ENCODE measurements at regions of chr12 and their contacts with region 1.

Region 1: DNA sequence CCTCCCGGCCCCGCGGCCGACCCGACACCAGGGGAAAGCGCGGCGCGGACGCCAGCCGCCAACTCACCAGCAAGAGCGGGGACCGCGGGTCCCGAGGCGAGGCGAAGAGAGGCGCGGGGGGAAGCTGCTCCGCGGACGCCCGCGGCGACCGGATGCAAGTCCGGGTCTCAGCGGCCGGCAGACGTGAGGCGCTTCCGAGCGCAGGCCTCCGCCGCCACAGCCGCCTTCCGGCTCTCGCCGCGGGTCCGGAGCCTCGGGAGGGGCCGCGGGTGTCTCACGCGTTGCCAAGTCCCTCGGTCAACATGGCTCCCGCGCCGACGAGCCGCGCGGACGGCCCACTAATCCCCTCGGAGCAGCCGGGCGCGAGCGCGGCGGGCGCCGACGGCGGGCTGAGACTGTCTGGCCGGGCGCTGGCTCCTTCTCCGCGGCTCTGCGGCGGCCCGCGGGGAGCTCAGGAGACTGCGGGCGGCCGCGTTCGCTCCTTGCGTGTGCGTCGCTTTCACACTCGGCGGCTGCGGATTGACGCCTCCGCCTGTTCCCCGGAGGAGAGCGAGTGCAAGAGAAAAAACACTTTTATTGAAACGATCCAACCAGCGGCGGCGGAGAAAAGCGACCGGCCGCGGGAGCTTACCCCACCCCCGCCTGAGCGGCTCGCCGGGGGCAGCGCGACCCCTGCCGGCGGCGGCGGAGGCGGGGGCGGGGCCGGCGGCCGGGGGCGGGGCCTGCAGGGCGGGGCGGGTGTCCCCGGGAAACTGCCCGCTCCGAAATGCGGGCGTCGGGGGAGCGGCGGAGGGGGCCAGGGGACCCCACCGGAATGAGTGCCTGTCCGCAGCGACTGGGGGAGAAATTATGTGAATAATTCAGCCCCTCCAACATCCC is at the start of gene CDK17:
- DNase-seq: no peak
- ATAC-seq: peak; percentile 59
- H3K4me3 ChIP-seq: peak within 1 kb of the TSS; percentile 92
- H3K27ac ChIP-seq: peak within 1 kb of the TSS; percentile 96
- H3K4me1 ChIP-seq: peaks cover 24% of the 10 kb centered on the region; the same call in 1 of the 2 replicates
- H3K27me3 ChIP-seq: no peaks in the 10 kb centered on the region
- CTCF ChIP-seq: peak in 2 of 3 experiments; percentile 36 to 58; a peak in 3 of 6 replicates
- EP300 ChIP-seq: no peak
- POLR2A ChIP-seq: peak; percentile 67
- RAD21 ChIP-seq: peak; percentile 58
- polyA plus RNA-seq, gene CDK17: 5.6 to 6.1 TPM

Region 2: DNA sequence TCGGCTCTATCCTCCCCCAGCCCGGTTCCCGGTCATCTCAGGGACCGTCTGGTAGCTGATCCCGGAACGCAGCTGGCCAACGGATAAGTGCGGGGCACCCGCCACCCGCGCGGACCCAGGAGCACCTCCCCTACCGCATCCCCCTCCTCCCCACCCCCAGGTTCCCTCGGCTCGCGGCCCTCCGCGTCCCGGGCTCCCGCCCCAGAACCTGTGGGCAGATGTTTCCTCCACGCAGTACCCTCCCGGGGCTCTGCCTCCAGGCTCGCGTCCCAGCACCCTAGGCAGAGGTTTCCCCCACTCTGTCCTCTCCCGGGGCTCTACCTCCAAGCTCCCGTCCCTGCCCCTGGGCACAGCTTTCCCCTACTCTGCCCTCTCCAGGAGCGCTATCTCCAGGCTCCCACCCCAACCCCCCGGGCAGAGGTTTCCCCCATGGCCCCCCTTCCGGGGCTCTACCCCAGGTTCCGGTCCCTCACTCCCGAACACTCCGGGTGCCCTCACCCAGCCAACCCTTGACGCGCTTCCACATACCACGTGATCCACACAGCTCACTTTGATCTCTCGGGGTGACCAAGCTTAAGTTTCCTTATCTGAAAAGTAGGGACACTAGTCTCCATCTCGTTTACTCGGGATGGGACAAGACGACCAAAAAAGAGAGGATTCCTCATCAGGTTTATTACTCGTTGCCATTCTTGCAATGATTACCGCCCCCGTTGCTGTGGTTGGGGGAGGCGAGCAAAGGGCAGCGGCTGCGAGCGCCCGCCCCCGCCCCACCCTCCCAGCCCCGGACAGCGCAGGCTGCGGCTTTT is 457.4 kb before region 1 on chr12 and contains the start of gene CCDC38:
- CTCF ChIA-PET with region 1: no interaction called
- POLR2A ChIA-PET with region 1: no interaction called
- RAD21 ChIA-PET with region 1: no interaction called
- SMC1A ChIA-PET with region 1: no interaction called
- in situ Hi-C with region 1: no loop called
- intact Hi-C with region 1: no loop called
- DNase-seq: peak; percentile 57
- ATAC-seq: peak; percentile 98
- H3K4me3 ChIP-seq: peak within 1 kb of the TSS; percentile 94
- H3K27ac ChIP-seq: peak within 1 kb of the TSS; percentile 53
- H3K4me1 ChIP-seq: peaks cover 3% of the 10 kb centered on the region; the same call in 1 of the 2 replicates
- H3K27me3 ChIP-seq: no peaks in the 10 kb centered on the region
- CTCF ChIP-seq: no peak
- EP300 ChIP-seq: no peak
- POLR2A ChIP-seq: peak; percentile 78
- RAD21 ChIP-seq: no peak
- polyA plus RNA-seq, gene CCDC38: not detected

Region 3: DNA sequence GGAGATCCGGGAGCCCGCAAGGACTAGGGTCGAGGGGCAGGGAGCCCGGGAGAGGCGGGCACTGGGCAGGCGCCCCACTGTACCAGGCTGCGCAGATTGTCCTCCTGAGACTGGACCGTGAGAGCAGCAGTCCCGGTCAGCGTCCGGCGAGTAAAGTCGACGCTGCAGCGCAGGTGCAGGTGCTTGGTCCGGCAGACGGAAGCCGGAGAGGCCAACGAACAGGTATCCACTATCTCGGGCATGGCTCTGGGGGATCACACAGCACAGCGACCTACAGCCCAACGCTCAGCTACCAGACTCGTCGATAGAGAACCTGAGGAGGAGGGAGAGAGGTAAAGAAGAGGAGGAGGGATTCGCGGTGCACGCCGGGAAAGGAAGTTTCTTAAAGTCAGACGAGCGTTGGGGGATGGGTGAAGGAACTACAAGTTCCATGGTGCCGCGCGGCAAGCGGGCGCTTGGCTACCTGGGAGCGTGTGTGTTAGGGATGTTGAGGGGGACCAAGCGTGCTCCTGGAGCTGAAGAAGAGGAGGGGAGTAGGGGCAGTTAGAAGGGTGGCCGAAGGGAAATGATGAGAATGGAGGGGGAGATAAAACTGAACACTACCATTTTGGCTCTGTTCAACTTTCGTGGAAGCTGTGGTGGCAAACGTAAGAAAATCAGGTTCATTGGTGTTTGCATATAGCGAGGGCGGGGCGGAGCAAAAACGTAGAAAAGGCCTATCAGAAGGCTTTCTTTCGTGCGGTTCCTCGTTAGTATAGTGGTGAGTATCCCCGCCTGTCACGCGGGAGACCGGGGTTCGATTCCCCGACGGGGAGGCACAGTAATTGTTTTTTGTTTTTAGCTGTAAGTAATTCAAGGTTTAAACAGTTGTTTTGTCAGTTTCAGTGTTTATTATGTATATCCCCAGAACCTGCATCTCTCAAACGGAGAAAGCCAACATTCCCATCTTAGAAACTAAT is 364.6 kb before region 1 on chr12 and contains the start of gene LTA4H:
- CTCF ChIA-PET with region 1: no interaction called
- POLR2A ChIA-PET with region 1: no interaction called
- RAD21 ChIA-PET with region 1: no interaction called
- SMC1A ChIA-PET with region 1: no interaction called
- in situ Hi-C with region 1: no loop called
- intact Hi-C with region 1: loop called (anchors 10 kb)
- DNase-seq: peak; percentile 97
- ATAC-seq: peak; percentile 93
- H3K4me3 ChIP-seq: peak within 1 kb of the TSS; percentile 77
- H3K27ac ChIP-seq: peak within 1 kb of the TSS; percentile 38; the same call in 1 of the 2 replicates
- H3K4me1 ChIP-seq: peaks cover 4% of the 10 kb centered on the region; the same call in 1 of the 2 replicates
- H3K27me3 ChIP-seq: no peaks in the 10 kb centered on the region
- CTCF ChIP-seq: no peak
- EP300 ChIP-seq: no peak; a peak in 1 of 4 replicates
- POLR2A ChIP-seq: peak; percentile 95
- RAD21 ChIP-seq: no peak
- polyA plus RNA-seq, gene LTA4H: 47.2 to 47.4 TPM

Region 4: GRCh38 chr12:96094201-96094600 is 306.0 kb before region 1 on chr12:
- CTCF ChIA-PET with region 1: no interaction called
- POLR2A ChIA-PET with region 1: no interaction called
- RAD21 ChIA-PET with region 1: no interaction called
- SMC1A ChIA-PET with region 1: no interaction called
- in situ Hi-C with region 1: no loop called
- intact Hi-C with region 1: no loop called
- DNase-seq: no peak
- ATAC-seq: no peak
- H3K4me3 ChIP-seq: no peak overlapping the region
- H3K27ac ChIP-seq: no peak overlapping the region
- H3K4me1 ChIP-seq: no peaks in the 10 kb centered on the region
- H3K27me3 ChIP-seq: no peaks in the 10 kb centered on the region; a peak in 1 of 4 replicates
- CTCF ChIP-seq: no peak
- EP300 ChIP-seq: no peak
- POLR2A ChIP-seq: no peak
- RAD21 ChIP-seq: no peak

Region 5: GRCh38 chr12:96208801-96209549 is 191.2 kb before region 1 on chr12:
- CTCF ChIA-PET with region 1: interaction called, 37 read pairs
- POLR2A ChIA-PET with region 1: no interaction called
- RAD21 ChIA-PET with region 1: interaction called, 53 read pairs
- SMC1A ChIA-PET with region 1: interaction called, 6 read pairs
- in situ Hi-C with region 1: no loop called
- intact Hi-C with region 1: no loop called
- DNase-seq: no peak
- ATAC-seq: peak; percentile 32
- H3K4me3 ChIP-seq: no peak overlapping the region
- H3K27ac ChIP-seq: no peak overlapping the region
- H3K4me1 ChIP-seq: peaks cover 35% of the 10 kb centered on the region
- H3K27me3 ChIP-seq: no peaks in the 10 kb centered on the region
- CTCF ChIP-seq: no peak
- EP300 ChIP-seq: no peak
- POLR2A ChIP-seq: no peak
- RAD21 ChIP-seq: no peak

Region 6: DNA sequence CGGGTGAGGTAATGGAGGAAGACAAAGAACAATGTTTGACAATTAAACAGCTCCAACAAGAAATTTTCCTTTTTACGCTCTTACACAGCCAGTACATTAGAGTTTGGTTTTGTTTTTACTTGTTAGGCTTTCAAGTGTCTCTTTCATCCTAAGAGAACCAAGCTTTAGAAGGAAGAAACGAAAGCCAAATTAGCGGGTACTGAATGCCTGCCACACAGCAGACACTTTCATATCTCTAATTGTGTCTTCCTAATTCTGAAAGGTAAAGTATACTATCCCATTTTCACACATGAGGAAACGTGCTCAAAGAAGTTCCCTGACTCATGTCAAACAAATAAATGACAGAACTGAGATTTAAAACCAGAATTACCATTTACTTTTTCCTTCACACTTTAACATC is 64.9 kb before region 1 on chr12:
- CTCF ChIA-PET with region 1: no interaction called
- POLR2A ChIA-PET with region 1: no interaction called
- RAD21 ChIA-PET with region 1: interaction called, 6 read pairs
- SMC1A ChIA-PET with region 1: interaction called, 14 read pairs
- in situ Hi-C with region 1: no loop called
- intact Hi-C with region 1: loop called (anchors 10 kb)
- DNase-seq: peak; percentile 77
- ATAC-seq: peak; percentile 97
- H3K4me3 ChIP-seq: no peak overlapping the region
- H3K27ac ChIP-seq: no peak overlapping the region
- H3K4me1 ChIP-seq: peaks cover 13% of the 10 kb centered on the region; the same call in 1 of the 2 replicates
- H3K27me3 ChIP-seq: no peaks in the 10 kb centered on the region
- CTCF ChIP-seq: no peak
- EP300 ChIP-seq: peak in 1 of 2 experiments; percentile 37; a peak in 1 of 4 replicates
- POLR2A ChIP-seq: no peak
- RAD21 ChIP-seq: no peak

Region 7: DNA sequence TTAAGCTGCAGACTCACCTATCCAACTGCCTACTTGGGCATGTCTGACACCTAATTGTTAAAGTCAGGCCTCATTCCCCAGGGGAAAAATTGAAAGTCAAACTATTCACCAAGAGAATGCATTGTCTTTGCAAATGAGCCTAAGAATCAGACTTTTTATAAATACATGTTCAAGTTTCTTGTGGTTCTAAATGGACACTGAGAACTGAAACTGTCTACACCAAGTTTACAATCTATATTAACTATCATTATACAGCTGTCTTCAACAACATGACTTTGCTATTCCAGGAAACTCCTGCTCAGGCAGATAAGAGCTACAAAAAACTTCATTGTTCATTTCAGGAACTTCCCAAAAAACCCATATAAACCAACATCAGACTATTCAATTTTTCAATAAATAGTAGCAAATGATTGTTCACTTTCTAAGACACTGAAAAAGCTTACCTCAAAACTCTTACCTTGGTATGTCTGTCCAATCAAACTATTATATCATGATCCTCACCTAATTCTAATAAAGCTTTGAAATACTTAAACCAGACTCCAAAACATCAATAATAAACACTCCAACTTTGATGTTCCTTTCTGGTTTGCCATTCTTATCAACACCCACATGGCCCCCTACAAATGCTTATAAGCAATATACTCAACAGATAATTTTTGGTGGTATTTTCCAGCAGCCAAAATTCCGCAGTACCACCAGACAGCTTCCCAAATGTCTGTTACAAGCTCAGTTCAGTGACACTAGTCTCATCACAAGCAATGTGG is 24.1 kb before region 1 on chr12:
- CTCF ChIA-PET with region 1: interaction called, 4 read pairs
- POLR2A ChIA-PET with region 1: interaction called, 3 read pairs
- RAD21 ChIA-PET with region 1: interaction called, 4 read pairs
- SMC1A ChIA-PET with region 1: interaction called, 10 read pairs
- in situ Hi-C with region 1: no loop called
- intact Hi-C with region 1: no loop called
- DNase-seq: peak; percentile 56
- ATAC-seq: peak; percentile 72
- H3K4me3 ChIP-seq: no peak overlapping the region
- H3K27ac ChIP-seq: peak overlapping the region; percentile 21; the same call in 1 of the 2 replicates
- H3K4me1 ChIP-seq: peaks cover 18% of the 10 kb centered on the region
- H3K27me3 ChIP-seq: no peaks in the 10 kb centered on the region
- CTCF ChIP-seq: no peak
- EP300 ChIP-seq: peak; percentile 14 to 20; a peak in 2 of 4 replicates
- POLR2A ChIP-seq: no peak
- RAD21 ChIP-seq: no peak

Region 8: GRCh38 chr12:96489103-96490056 is 89.2 kb after region 1 on chr12 and contains the start of gene CFAP54:
- CTCF ChIA-PET with region 1: interaction called, 11 read pairs
- POLR2A ChIA-PET with region 1: no interaction called
- RAD21 ChIA-PET with region 1: interaction called, 15 read pairs
- SMC1A ChIA-PET with region 1: interaction called, 18 read pairs
- in situ Hi-C with region 1: loop called (anchors 5 kb)
- intact Hi-C with region 1: loop called (anchors 2 kb)
- DNase-seq: peak; percentile 65
- ATAC-seq: peak; percentile 91
- H3K4me3 ChIP-seq: peak within 1 kb of the TSS; percentile 73
- H3K27ac ChIP-seq: no peak within 1 kb of the TSS
- H3K4me1 ChIP-seq: peaks cover 14% of the 10 kb centered on the region
- H3K27me3 ChIP-seq: no peaks in the 10 kb centered on the region
- CTCF ChIP-seq: peak; percentile 88 to 98 (median 91)
- EP300 ChIP-seq: peak; percentile 12 to 40; a peak in 2 of 4 replicates
- POLR2A ChIP-seq: no peak
- RAD21 ChIP-seq: peak; percentile 80
- polyA plus RNA-seq, gene CFAP54: 0.19 to 0.55 TPM

Region 9: GRCh38 chr12:96919510-96920210 is 519.5 kb after region 1 on chr12:
- CTCF ChIA-PET with region 1: no interaction called
- POLR2A ChIA-PET with region 1: no interaction called
- RAD21 ChIA-PET with region 1: no interaction called
- SMC1A ChIA-PET with region 1: no interaction called
- in situ Hi-C with region 1: no loop called
- intact Hi-C with region 1: no loop called
- DNase-seq: no peak
- ATAC-seq: peak; percentile 47
- H3K4me3 ChIP-seq: no peak overlapping the region
- H3K27ac ChIP-seq: no peak overlapping the region
- H3K4me1 ChIP-seq: peaks cover 4% of the 10 kb centered on the region; the same call in 1 of the 2 replicates
- H3K27me3 ChIP-seq: no peaks in the 10 kb centered on the region
- CTCF ChIP-seq: no peak
- EP300 ChIP-seq: no peak
- POLR2A ChIP-seq: no peak
- RAD21 ChIP-seq: no peak